Activated B cell treated with CpG ODN at 0.5 μM for 24 hours (primary cell): ENCODE measurements at regions of chr6 and their contacts with region 1.

Region 1: GRCh38 chr6:38702558-38703397 is at the start of gene GLO1:
- DNase-seq: peak; percentile 85
- ATAC-seq: peak; percentile 99
- H3K4me3 Mint-ChIP-seq: peak within 1 kb of the TSS; percentile 92
- H3K27ac Mint-ChIP-seq: peak within 1 kb of the TSS; percentile 92
- H3K4me1 Mint-ChIP-seq: peaks cover 17% of the 10 kb centered on the region
- H3K27me3 Mint-ChIP-seq: peaks cover 7% of the 10 kb centered on the region
- CTCF ChIP-seq: no peak
- total RNA-seq, gene GLO1: 52.0 and 52.4 TPM in 2 replicates

Region 2: GRCh38 chr6:37919417-37920157 is 783.2 kb before region 1 on chr6:
- CTCF ChIA-PET with region 1: no interaction called
- POLR2A ChIA-PET with region 1: no interaction called
- intact Hi-C with region 1: no loop called
- DNase-seq: no peak
- ATAC-seq: no peak
- H3K4me3 Mint-ChIP-seq: no peak overlapping the region
- H3K27ac Mint-ChIP-seq: no peak overlapping the region
- H3K4me1 Mint-ChIP-seq: peaks cover 45% of the 10 kb centered on the region
- H3K27me3 Mint-ChIP-seq: no peaks in the 10 kb centered on the region
- CTCF ChIP-seq: no peak

Region 3: GRCh38 chr6:38639498-38640215 is 63.1 kb before region 1 on chr6 and contains the start of gene BTBD9:
- CTCF ChIA-PET with region 1: no interaction called
- POLR2A ChIA-PET with region 1: interaction called, 11 read pairs
- intact Hi-C with region 1: loop called (anchors 1 kb)
- DNase-seq: peak; percentile 92
- ATAC-seq: peak; percentile 86
- H3K4me3 Mint-ChIP-seq: peak within 1 kb of the TSS; percentile 94
- H3K27ac Mint-ChIP-seq: peak within 1 kb of the TSS; percentile 95
- H3K4me1 Mint-ChIP-seq: peaks cover 31% of the 10 kb centered on the region
- H3K27me3 Mint-ChIP-seq: no peaks in the 10 kb centered on the region
- CTCF ChIP-seq: no peak
- total RNA-seq, gene BTBD9: 19.4 and 25.7 TPM in 2 replicates

Region 4: DNA sequence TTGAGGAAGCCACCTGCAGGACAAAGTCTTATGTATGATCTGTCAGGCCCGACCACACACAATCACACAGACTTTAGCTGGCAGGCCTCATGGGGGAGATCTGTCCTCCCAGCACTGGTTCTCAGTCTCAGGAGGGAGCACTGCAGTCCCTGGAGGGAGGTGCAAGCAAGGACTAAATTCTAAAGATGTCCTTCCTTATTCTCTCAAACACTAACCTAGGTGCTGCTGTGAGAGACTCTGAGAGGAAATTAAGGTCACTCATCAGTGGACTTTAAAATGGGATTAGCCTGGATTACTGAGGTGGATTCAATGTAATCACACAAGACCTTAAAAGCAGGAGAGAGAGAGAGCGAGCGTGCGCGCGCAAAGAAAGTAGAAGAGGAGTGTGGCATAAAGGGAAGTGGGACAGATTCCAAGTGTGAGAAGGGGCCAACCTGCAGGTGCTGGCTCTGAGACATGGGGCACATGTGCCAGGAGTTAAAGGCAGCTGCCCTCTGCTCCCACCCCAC is 14.1 kb before region 1 on chr6:
- CTCF ChIA-PET with region 1: no interaction called
- POLR2A ChIA-PET with region 1: interaction called, 4 read pairs
- intact Hi-C with region 1: loop called (anchors 2 kb)
- DNase-seq: peak; percentile 32
- ATAC-seq: peak; percentile 98
- H3K4me3 Mint-ChIP-seq: peak overlapping the region; percentile 75
- H3K27ac Mint-ChIP-seq: peak overlapping the region; percentile 79
- H3K4me1 Mint-ChIP-seq: peaks cover 44% of the 10 kb centered on the region
- H3K27me3 Mint-ChIP-seq: no peaks in the 10 kb centered on the region
- CTCF ChIP-seq: no peak